Naive thymus-derived CD8-positive, alpha-beta T cell (primary cell): ENCODE measurements at regions of chr19 and their contacts with region 1.

Region 1: GRCh38 chr19:50383852-50384684 is at the start of gene POLD1:
- DNase-seq: peak; percentile 97 to 99 (median 99)
- ATAC-seq: peak; percentile 84 to 87
- H3K4me3 Mint-ChIP-seq: peak within 1 kb of the TSS; percentile 92 to 99 (median 96)
- H3K27ac Mint-ChIP-seq: peak within 1 kb of the TSS; percentile 88 to 98 (median 94)
- H3K4me1 Mint-ChIP-seq: peaks cover 35 to 52% (median 39%) of the 10 kb centered on the region in 4 donors
- H3K27me3 Mint-ChIP-seq: peaks cover 0 to 5% (median 0%) of the 10 kb centered on the region in 5 donors
- polyA plus RNA-seq, gene POLD1: 26.0 to 34.4 (median 33.8) TPM

Region 2: GRCh38 chr19:50325310-50326100 is 58.6 kb before region 1 on chr19:
- POLR2A ChIA-PET with region 1: no interaction called
- DNase-seq: peak; percentile 44 to 75 (median 64)
- ATAC-seq: peak; percentile 45 to 55
- H3K4me3 Mint-ChIP-seq: peak overlapping the region in 2 of 10 donors; percentile 22 to 42
- H3K27ac Mint-ChIP-seq: no peak overlapping the region
- H3K4me1 Mint-ChIP-seq: peaks cover 25 to 39% (median 35%) of the 10 kb centered on the region in 4 donors
- H3K27me3 Mint-ChIP-seq: peaks cover 17 to 71% (median 54%) of the 10 kb centered on the region in 5 donors

Region 3: GRCh38 chr19:50368649-50369570 is 15.2 kb before region 1 on chr19:
- POLR2A ChIA-PET with region 1: interaction called, 11 read pairs
- DNase-seq: peak; percentile 62 to 89 (median 79)
- ATAC-seq: peak; percentile 71 to 82
- H3K4me3 Mint-ChIP-seq: peak overlapping the region; percentile 87 to 98 (median 94)
- H3K27ac Mint-ChIP-seq: peak overlapping the region; percentile 75 to 97 (median 93)
- H3K4me1 Mint-ChIP-seq: peaks cover 17 to 41% (median 38%) of the 10 kb centered on the region in 4 donors
- H3K27me3 Mint-ChIP-seq: peaks cover 0 to 2% (median 0%) of the 10 kb centered on the region in 5 donors